GM12878 (cell line): ENCODE measurements at regions of chr12 and their contacts with region 1.

Region 1: DNA sequence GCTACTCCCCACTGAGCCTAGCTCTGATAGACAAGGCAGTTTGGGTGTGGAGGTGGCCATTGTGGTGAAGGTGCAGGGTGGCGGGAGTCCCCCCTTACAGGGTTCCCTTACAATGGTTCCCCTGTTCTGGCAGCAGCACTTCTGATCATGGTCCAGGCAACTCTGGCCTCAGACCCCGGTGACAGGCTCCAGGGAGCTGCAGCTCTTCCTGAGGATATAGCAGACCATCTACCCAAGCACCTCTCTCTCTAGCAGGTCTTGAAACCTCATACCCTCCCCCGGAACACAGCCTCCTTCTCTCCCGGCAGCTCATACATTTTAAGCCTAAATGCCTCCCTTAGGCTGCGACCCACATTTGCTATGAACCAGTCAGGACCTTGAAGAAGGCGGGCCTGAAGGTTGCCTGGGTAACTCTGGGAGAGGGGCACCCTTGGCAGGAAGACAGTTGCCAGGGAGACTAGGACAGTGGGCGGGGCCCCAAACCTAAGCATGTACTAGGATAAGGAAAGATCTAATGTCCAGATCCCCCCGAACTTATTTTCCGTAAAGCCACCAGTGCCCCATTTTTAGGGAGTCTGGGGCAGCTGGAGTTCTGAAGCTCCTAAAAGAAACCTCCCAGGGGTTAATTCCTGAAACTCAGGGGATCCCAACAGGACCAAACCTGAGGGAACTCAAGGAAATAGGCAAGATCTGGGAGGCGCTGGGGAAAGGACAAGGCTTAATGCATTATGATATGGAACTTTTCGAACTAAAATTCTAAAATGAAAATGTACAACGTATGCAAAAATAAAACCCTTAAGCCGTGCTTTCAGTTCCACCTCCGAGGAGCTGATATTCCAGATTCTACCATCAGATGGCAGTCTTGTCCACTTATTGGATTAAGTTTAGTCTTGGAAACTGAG is 4.5 kb upstream of the GDF11 start:
- DNase-seq: peak; percentile 77
- ATAC-seq: peak; percentile 93
- H3K4me3 ChIP-seq: peak overlapping the region; percentile 78
- H3K27ac ChIP-seq: peak overlapping the region; percentile 45
- H3K4me1 ChIP-seq: peaks cover 7% of the 10 kb centered on the region
- H3K27me3 ChIP-seq: no peaks in the 10 kb centered on the region
- CTCF ChIP-seq: peak; percentile 68 to 89 (median 87); a peak in 5 of 6 replicates
- EP300 ChIP-seq: no peak
- POLR2A ChIP-seq: no peak
- RAD21 ChIP-seq: peak; percentile 96

Region 2: DNA sequence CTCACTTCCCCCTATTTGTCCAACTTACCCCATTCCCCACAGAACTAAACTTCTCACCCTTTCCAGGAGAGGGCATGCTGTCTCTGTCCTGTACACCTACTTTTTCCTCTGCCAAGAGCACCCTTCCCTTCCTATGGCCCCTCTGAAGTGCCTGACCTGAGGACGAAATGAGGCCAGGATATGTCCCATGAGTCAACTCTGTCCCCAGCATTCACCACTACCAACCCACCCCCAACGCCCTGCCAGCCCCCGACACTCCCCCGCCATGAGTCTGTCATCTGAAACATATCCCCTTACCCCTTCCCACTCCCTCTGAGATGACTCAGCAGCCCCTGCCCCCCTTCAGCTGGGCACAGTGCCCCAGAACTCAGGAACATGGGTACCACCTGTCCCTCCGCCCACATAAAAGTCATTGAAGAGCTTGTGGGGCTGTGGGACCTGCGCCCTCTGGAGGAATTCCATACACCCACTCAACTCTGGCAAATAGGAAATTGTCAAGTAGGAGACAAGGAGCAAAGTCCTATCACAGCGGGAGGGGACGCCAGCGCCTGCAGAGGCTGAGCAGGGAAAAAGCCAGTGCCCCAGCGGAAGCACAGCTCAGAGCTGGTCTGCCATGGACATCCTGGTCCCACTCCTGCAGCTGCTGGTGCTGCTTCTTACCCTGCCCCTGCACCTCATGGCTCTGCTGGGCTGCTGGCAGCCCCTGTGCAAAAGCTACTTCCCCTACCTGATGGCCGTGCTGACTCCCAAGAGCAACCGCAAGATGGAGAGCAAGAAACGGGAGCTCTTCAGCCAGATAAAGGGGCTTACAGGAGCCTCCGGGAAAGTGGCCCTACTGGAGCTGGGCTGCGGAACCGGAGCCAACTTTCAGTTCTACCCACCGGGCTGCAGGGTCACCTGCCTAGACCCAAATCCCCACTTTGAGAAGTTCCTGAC is 57.0 kb before region 1 on chr12:
- CTCF ChIA-PET with region 1: interaction called, 13 read pairs
- POLR2A ChIA-PET with region 1: no interaction called
- RAD21 ChIA-PET with region 1: interaction called, 8 read pairs
- SMC1A ChIA-PET with region 1: interaction called, 5 read pairs
- in situ Hi-C with region 1: no loop called
- intact Hi-C with region 1: no loop called
- DNase-seq: no peak
- ATAC-seq: peak; percentile 78
- H3K4me3 ChIP-seq: peak overlapping the region; percentile 23; the same call in 1 of the 2 replicates
- H3K27ac ChIP-seq: no peak overlapping the region
- H3K4me1 ChIP-seq: peaks cover 10% of the 10 kb centered on the region
- H3K27me3 ChIP-seq: no peaks in the 10 kb centered on the region
- CTCF ChIP-seq: peak; percentile 13 to 24 (median 19); a peak in 4 of 6 replicates
- EP300 ChIP-seq: no peak
- POLR2A ChIP-seq: no peak
- RAD21 ChIP-seq: peak; percentile 23; the same call in 1 of the 2 replicates

Region 3: DNA sequence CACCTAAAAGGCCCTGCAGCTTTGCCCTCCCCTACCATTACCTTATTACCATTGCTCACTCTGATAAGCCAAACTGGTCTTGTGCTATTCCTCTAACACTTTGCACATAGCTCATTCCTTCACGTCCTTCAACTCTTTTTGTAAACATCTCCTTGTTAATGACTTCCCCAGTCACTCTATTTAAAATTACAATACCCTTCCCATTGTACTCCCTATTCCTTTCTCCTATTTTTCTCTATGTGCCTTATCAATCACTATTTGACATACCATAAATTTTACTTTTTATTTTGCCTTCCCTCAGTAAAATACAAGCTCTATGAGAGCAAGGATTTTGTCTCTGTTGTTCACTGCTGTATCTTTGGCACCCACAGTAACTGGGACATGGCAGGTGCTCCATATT is 73.7 kb after region 1 on chr12:
- CTCF ChIA-PET with region 1: interaction called, 26 read pairs
- POLR2A ChIA-PET with region 1: interaction called, 38 read pairs
- RAD21 ChIA-PET with region 1: interaction called, 36 read pairs
- SMC1A ChIA-PET with region 1: interaction called, 22 read pairs
- in situ Hi-C with region 1: no loop called
- intact Hi-C with region 1: loop called (anchors 2 kb)
- DNase-seq: no peak
- ATAC-seq: 0 out of 3 replicates have a peak, but pooled peaks have one; percentile 12
- H3K4me3 ChIP-seq: no peak overlapping the region
- H3K27ac ChIP-seq: no peak overlapping the region
- H3K4me1 ChIP-seq: 0 out of 2 replicates have a peak, but pooled peaks cover 5% of the 10 kb centered on the region
- H3K27me3 ChIP-seq: no peaks in the 10 kb centered on the region
- CTCF ChIP-seq: no peak
- EP300 ChIP-seq: no peak
- POLR2A ChIP-seq: no peak
- RAD21 ChIP-seq: no peak

Region 4: DNA sequence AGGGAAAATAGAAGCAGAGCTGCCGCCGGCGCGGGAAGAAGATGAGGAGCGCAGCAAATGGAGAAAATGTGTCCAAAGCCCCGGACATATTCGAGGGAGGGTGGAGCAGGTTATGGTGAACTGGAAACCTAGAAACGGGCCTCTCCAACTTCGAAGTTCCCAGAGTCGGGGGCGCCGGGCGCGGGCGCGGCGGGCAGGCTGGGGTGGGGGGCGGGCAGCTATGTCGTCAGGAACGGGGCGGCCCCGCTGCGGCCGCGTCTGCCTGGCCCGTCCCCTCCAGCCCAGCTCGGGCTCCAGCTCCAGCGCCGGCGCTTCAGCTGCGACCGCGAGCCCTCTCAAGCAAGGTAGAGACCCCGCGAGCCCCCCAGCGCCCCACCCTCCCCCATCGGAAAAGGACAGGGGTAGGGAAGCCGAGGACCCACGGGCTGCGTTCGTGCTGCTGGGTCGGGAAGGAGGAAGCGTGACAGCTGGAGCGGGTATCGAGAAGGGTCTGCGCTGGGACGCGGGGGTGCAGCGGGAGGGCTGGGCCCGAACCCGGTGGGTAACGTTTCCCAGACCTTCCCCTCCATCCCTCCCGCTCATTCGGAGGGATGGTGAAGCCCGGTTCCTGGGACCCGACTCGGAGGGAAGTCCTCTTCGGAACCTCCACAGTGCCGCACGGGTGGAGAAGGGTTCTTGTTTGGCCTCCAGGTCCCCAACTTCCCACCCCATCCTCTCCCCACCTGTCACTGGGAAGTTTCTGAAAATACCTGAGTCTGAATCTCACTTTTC is 193.6 kb after region 1 on chr12:
- CTCF ChIA-PET with region 1: interaction called, 48 read pairs
- POLR2A ChIA-PET with region 1: interaction called, 24 read pairs
- RAD21 ChIA-PET with region 1: interaction called, 30 read pairs
- SMC1A ChIA-PET with region 1: interaction called, 23 read pairs
- in situ Hi-C with region 1: no loop called
- intact Hi-C with region 1: loop called (anchors 1 kb)
- DNase-seq: no peak
- ATAC-seq: peak; percentile 28
- H3K4me3 ChIP-seq: peak overlapping the region; percentile 99
- H3K27ac ChIP-seq: peak overlapping the region; percentile 83
- H3K4me1 ChIP-seq: peaks cover 8% of the 10 kb centered on the region; the same call in 1 of the 2 replicates
- H3K27me3 ChIP-seq: no peaks in the 10 kb centered on the region
- CTCF ChIP-seq: no peak
- EP300 ChIP-seq: no peak
- POLR2A ChIP-seq: peak; percentile 45
- RAD21 ChIP-seq: no peak

Region 5: DNA sequence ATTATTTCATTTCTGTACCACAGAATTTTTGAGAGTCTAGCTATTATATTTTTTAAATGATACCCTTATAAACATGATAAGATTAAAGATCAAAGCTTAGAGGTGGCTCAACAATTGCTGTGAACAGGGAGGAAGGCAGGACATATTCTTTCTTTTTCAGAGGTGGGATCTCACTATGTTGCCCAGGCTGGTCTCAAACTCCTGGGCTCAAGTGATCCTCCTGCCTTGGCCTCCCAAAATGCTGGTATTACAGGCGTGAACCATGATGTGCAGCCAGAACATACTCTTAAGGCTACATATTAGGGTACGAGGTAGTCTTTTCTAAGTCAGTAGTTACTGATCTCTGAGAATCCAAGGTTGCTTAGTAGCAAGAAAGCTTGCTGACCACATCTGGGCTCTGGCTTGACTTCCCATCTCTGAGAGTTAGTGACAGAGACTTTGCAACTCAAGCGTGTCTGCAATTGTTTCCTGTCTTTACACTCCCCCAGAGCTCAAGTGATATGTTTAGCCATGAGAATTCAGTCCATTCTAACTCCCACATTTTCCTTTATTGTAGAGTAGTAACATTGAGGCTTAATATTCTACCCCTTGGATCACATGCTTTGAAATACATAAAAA is 244.1 kb after region 1 on chr12:
- CTCF ChIA-PET with region 1: interaction called, 9 read pairs
- POLR2A ChIA-PET with region 1: interaction called, 3 read pairs
- RAD21 ChIA-PET with region 1: interaction called, 14 read pairs
- SMC1A ChIA-PET with region 1: interaction called, 4 read pairs
- in situ Hi-C with region 1: no loop called
- intact Hi-C with region 1: no loop called
- DNase-seq: peak; percentile 60
- ATAC-seq: peak; percentile 96
- H3K4me3 ChIP-seq: 0 out of 2 replicates have a peak overlapping the region, but pooled peaks have one; percentile 12
- H3K27ac ChIP-seq: peak overlapping the region; percentile 38
- H3K4me1 ChIP-seq: peaks cover 16% of the 10 kb centered on the region
- H3K27me3 ChIP-seq: no peaks in the 10 kb centered on the region
- CTCF ChIP-seq: no peak
- EP300 ChIP-seq: no peak
- POLR2A ChIP-seq: no peak
- RAD21 ChIP-seq: no peak

Region 6: DNA sequence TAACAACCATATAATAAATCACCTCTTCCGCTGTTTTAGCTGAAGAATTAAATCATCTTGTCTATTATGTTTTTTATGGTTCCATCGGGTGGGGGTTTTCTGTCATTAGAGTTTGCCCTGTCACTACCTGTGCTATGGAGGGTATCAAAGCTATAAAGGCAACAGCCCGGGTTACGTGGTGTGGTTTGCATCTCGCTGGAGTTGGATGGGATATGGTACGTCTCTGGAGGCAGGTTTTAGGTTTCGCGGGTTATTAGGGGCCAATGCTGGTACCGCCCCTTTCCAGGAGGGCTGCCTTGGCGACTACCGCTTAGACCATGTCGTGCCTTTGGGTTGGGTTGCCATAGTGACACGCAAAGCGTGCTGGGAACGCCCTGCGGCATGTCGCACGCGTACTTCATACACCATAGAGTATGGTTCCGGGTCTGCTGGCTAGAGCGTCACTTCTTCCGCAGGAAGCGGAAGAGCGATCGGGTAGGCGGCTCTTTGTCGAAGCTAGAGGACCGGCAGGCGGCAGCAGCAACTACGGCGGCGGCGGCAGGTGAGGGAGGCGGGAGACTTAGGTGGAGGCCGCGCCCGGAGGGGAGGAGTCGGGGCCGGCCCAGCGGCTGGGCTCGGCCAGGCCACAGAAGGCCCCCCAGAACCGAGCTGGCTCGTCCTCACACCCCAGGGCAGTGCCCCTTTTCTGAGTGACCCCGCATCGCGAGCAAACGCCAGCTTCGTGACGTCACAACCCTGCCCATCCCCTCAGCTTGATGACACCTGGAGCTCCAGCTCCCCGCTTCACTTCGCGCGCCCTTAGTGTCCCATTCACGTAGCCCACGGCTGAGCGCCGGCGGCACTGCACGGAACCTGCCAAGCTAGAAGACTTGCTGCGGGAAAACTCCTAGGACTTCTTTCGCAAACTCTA is 379.7 kb after region 1 on chr12 and contains the start of gene ZC3H10:
- CTCF ChIA-PET with region 1: interaction called, 14 read pairs
- POLR2A ChIA-PET with region 1: interaction called, 4 read pairs
- RAD21 ChIA-PET with region 1: interaction called, 17 read pairs
- SMC1A ChIA-PET with region 1: interaction called, 16 read pairs
- in situ Hi-C with region 1: no loop called
- intact Hi-C with region 1: loop called (anchors 5 kb)
- DNase-seq: peak; percentile 99
- ATAC-seq: peak; percentile 86
- H3K4me3 ChIP-seq: peak within 1 kb of the TSS; percentile 90
- H3K27ac ChIP-seq: peak within 1 kb of the TSS; percentile 79
- H3K4me1 ChIP-seq: peaks cover 15% of the 10 kb centered on the region
- H3K27me3 ChIP-seq: no peaks in the 10 kb centered on the region
- CTCF ChIP-seq: peak; percentile 40 to 69 (median 48)
- EP300 ChIP-seq: no peak
- POLR2A ChIP-seq: peak; percentile 99
- RAD21 ChIP-seq: no peak
- polyA plus RNA-seq, gene ZC3H10: 0.56 to 0.75 TPM